HEK293 (cell line): ENCODE measurements at regions of chr11 and their contacts with region 1.

Region 1: DNA sequence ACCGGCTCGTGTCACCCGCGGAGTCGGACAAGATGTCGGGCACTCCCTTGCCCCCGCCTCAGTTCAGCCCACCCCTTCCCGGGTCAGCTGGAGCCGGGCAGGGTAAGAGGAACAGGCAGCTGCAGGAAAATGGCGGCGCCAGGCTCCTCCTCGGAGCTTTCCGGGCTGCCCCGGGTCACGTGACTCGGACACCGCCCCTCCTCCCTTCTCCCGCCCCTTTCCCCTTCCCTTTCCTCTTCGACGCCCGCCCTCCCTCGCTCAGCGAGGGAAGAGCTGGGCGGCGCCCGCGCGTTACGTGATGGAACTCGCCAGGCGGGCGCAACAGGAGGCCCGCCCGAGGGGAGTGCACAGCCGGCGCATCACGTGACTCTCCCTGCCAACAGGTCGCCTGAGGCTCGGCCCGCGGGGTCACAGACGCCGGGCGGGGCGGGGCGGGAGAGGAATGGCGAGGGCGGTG is at the start of gene PICALM:
- H3K4me3 ChIP-seq: peak within 1 kb of the TSS; percentile 69
- H3K27ac ChIP-seq: peak within 1 kb of the TSS; percentile 67
- H3K4me1 ChIP-seq: peaks cover 3% of the 10 kb centered on the region; the same call in 1 of the 2 replicates
- CTCF ChIP-seq: no peak

Region 2: GRCh38 chr11:85988780-85989179 is 80.2 kb before region 1 on chr11:
- CTCF ChIA-PET with region 1: no interaction called
- POLR2A ChIA-PET with region 1: no interaction called
- H3K4me3 ChIP-seq: no peak overlapping the region
- H3K27ac ChIP-seq: no peak overlapping the region
- H3K4me1 ChIP-seq: no peaks in the 10 kb centered on the region
- CTCF ChIP-seq: no peak

Region 3: GRCh38 chr11:86140334-86140990 is 71.5 kb after region 1 on chr11:
- CTCF ChIA-PET with region 1: no interaction called
- POLR2A ChIA-PET with region 1: no interaction called
- H3K4me3 ChIP-seq: no peak overlapping the region
- H3K27ac ChIP-seq: no peak overlapping the region
- H3K4me1 ChIP-seq: no peaks in the 10 kb centered on the region
- CTCF ChIP-seq: no peak

Region 4: GRCh38 chr11:86244522-86245368 is 175.8 kb after region 1 on chr11 and contains the start of gene EED:
- CTCF ChIA-PET with region 1: no interaction called
- POLR2A ChIA-PET with region 1: interaction called, 13 read pairs
- H3K4me3 ChIP-seq: peak within 1 kb of the TSS; percentile 87
- H3K27ac ChIP-seq: peak within 1 kb of the TSS; percentile 84
- H3K4me1 ChIP-seq: no peaks in the 10 kb centered on the region; the same call in none of the 2 replicates
- CTCF ChIP-seq: peak; percentile 44; the same call in 1 of the 2 replicates